ENCODE measurements at regions of chrX and their contacts with region 1.

Region 1: GRCh38 chrX:102659790-102660757 is 8.8 kb downstream of the GPRASP1 start:
- DNase-seq: peak; percentile 95
- H3K4me3 ChIP-seq: peak overlapping the region; percentile 24 to 68 (median 34)
- H3K27ac ChIP-seq: peak overlapping the region in 7 of 8 donors; percentile 58 to 80 (median 71)
- H3K4me1 ChIP-seq: peaks cover 0 to 13% (median 0%) of the 10 kb centered on the region in 6 donors
- H3K27me3 ChIP-seq: no peaks in the 10 kb centered on the region
- CTCF ChIP-seq: peak in 3 of 11 experiments; percentile 14 to 33 (median 25)
- POLR2A ChIP-seq: no peak

Region 2: DNA sequence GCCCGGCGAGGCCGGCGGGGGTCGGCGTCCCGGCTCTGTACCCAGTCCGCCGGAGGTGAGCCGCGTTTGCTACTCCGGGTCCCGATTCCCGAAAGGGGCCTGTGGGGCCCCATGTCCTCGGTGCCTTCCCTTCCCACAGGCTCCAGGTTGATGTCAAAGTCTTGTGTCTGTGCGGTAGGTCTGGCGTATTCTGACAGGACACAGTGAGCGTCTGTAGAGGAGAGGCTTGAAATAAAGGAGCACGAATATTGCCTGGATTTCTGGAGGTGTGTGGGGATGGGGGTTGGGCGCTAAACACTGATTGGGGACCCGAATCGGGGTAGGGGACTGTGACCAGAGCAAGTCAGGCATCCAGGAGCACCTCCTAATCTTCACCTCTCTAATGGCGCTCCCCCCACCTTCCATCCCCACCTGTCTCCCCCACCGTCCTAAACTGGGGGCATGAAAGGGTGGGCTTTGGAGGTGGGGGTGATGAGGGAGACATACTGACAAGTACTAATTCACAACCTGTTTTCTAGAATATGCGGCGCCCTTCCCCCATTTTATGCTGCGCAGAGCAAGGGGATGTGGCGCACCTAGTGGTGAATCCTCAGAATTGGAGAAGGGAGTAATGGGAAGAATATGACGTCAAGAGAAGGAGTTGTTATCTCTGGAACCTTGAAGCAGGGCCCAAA is 53.0 kb after region 1 on chrX:
- intact Hi-C with region 1: loop called (anchors 10 kb)
- DNase-seq: no peak
- H3K4me3 ChIP-seq: peak overlapping the region; percentile 24 to 72 (median 44)
- H3K27ac ChIP-seq: peak overlapping the region in 7 of 8 donors; percentile 63 to 79 (median 75)
- H3K4me1 ChIP-seq: peaks cover 0 to 8% (median 0%) of the 10 kb centered on the region in 6 donors
- H3K27me3 ChIP-seq: peaks cover 0 to 19% (median 11%) of the 10 kb centered on the region in 7 donors
- CTCF ChIP-seq: peak in 8 of 11 experiments; percentile 18 to 57 (median 48)
- POLR2A ChIP-seq: no peak

Region 3: GRCh38 chrX:103148075-103148474 is 488.0 kb after region 1 on chrX:
- intact Hi-C with region 1: no loop called
- DNase-seq: no peak
- H3K4me3 ChIP-seq: no peak overlapping the region
- H3K27ac ChIP-seq: no peak overlapping the region
- H3K4me1 ChIP-seq: no peaks in the 10 kb centered on the region
- H3K27me3 ChIP-seq: peaks cover 0 to 10% (median 0%) of the 10 kb centered on the region in 7 donors
- CTCF ChIP-seq: no peak
- POLR2A ChIP-seq: no peak